GM10248 (cell line): ENCODE measurements at regions of chr18 and their contacts with region 1.

Region 1: DNA sequence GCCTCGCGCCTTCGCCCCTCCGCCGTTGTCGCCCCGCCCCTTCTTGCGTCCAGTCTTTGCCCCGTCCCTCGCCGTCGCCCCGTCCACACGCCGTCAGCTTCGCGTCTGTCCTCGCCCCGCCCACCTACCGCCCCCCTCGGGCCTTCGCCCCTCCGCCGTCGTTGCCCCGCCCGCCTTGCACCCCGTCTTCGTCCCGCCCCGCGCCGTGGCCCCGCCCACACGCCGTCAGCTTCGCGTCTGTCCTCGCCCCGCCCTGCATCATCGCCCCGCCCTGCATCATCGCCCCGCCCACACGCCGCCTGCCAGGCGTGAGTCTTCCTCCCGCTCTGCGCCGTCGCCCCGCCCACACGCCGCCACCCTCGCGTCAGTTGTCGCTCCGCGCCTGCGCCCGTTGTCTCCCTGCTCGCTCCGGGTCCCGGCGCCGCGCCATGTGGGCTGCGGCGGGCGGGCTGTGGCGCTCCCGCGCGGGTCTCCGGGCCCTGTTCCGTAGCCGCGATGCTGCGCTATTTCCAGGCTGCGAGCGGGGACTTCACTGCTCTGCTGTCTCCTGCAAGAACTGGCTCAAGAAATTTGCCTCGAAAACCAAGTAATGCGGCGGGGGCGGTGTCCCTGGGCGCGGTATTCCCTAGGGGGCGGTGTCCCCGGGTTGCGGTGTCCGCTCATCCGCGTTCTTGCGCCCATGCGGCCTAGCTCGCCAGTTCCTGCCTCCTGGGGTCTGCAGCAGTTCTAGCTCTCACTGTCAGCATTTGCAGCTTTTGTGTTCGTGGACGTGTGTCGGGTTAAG is at the start of gene RBFA:
- DNase-seq: peak; percentile 98
- CTCF ChIP-seq: peak; percentile 41

Region 2: GRCh38 chr18:80010551-80010906 is 23.7 kb before region 1 on chr18:
- CTCF ChIA-PET with region 1: no interaction called
- POLR2A ChIA-PET with region 1: no interaction called
- DNase-seq: no peak
- CTCF ChIP-seq: no peak

Region 3: DNA sequence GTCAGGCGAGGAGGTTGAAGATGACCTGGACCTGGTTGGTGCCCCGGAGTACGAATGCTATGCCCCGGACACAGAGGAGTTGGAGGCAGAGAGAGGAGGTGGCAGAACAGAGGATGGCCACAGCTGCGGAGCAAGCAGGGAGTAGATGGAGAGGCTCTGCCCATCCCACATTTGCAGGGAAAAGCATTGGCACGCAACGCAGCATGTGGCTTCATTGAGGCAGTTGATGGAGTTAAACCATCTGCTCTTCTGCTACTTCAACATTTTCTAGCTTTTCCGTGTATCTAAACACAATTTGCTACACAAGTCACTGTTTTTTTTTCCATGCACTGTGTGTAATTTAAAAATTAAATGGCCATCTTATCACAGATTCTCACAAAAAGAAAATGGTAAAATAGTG is 11.8 kb after region 1 on chr18:
- CTCF ChIA-PET with region 1: interaction called, 11 read pairs
- POLR2A ChIA-PET with region 1: interaction called, 5 read pairs
- DNase-seq: no peak
- CTCF ChIP-seq: no peak